Gastrocnemius medialis (tissue), 4 donors: ENCODE measurements at regions of chrX and their contacts with region 1.

Region 1: DNA sequence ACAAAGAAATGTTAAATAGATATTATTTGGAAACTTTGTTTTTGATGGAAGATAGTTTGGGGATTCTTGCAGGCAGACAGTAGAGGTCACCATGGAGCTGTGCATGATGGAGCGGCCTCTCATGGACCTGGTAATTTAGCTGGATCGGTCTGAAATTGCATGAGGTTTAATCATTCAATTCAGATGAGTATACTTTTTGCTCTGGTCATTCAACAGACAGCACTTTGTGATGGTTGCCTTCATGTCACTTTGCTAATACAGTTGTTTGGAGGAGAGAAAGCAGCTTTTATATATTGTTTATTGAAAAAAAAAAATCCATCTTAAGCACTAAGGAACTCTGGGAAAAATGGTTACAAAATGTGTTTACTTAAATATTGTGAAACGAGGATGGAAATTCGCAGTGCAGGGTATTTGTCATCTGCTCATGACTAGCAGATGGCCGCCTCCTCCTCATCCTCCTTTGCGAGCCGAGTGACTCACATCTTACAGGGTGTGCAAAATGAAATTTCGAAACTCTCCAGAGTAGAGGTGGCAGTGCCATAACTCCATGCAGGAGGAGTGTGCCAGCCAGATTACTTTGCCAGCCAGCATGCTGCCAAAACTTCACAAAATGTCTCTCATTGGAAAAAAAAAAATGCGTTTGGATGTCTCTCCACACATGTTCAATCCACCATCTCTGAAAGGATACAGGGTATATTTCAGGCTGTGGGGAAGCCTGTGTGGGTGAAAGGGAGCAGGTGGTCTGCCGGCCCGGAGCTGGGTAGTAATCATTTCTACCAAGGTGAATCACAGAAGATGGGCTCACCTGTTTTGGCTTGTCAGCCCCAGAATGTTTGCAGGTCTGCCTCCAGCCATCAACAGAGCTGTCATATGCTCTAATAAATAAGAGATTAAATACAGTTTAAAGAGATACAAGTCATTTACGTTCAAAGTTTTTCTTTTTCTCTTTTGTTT is 314.9 kb upstream of the DIPK2B start:
- DNase-seq: peak; percentile 71 to 77
- ATAC-seq: peak; percentile 96 to 98
- H3K4me3 ChIP-seq: peak overlapping the region in 1 of 4 donors; percentile 12
- H3K27ac ChIP-seq: peak overlapping the region; percentile 48 to 67 (median 64)
- H3K4me1 ChIP-seq: peaks cover 0 to 20% of the 10 kb centered on the region in 2 donors
- H3K27me3 ChIP-seq: peaks cover 0 to 5% (median 0%) of the 10 kb centered on the region in 3 donors
- CTCF ChIP-seq: peak in 4 of 5 experiments; percentile 23 to 54 (median 50)
- POLR2A ChIP-seq: peak in 1 of 2 donors; percentile 45

Region 2: DNA sequence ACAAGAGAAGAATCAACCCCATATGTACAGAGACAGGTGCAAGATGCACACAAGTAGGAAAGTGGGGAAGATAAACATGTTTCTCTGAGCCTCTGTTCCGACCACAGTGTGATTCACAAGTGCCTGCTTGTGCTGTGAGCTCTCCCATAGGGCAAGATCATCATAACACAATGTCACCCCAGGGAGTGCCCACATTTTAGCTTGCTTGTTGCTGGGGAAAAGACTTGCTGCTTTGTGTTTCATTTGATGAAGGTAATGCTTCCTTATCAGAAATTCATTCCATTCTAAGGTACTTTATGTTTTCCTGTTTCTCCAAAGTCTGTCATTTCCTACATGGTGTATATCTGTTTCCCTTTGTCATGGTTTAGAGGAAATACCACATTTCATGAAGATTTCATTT is 10.3 kb before region 1 on chrX:
- in situ Hi-C with region 1: no loop called
- intact Hi-C with region 1: loop called (anchors 1 kb)
- DNase-seq: no peak
- ATAC-seq: no peak
- H3K4me3 ChIP-seq: no peak overlapping the region
- H3K27ac ChIP-seq: peak overlapping the region in 1 of 4 donors; percentile 83
- H3K4me1 ChIP-seq: peaks cover 0 to 28% of the 10 kb centered on the region in 2 donors
- H3K27me3 ChIP-seq: no peaks in the 10 kb centered on the region
- CTCF ChIP-seq: no peak
- POLR2A ChIP-seq: no peak

Region 3: DNA sequence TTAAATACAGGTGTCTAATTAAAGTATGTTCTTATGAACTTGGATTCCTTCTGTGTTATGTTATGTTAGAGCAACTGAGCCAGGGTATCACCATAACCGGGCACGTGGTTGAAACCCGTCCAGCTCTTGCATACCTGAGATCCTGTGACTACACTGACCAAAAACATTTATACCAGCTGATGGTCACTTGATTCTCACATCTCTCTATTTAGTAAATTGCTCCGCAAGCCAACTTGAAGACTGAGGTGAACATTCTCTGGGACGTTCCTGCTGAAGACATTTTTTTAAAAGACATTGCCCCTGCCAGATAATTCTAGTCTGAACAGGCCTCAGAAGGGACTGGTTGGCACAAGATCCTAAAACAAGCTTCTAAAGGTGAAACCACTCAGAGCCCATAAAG is 235.1 kb after region 1 on chrX:
- in situ Hi-C with region 1: loop called in 2 of 4 experiments (anchors 25 kb)
- intact Hi-C with region 1: loop called (anchors 2 kb)
- DNase-seq: peak in 1 of 2 donors; percentile 15
- ATAC-seq: peak in 1 of 2 donors; percentile 72
- H3K4me3 ChIP-seq: no peak overlapping the region
- H3K27ac ChIP-seq: peak overlapping the region in 1 of 4 donors; percentile 25
- H3K4me1 ChIP-seq: peaks cover 0 to 5% of the 10 kb centered on the region in 2 donors
- H3K27me3 ChIP-seq: no peaks in the 10 kb centered on the region
- CTCF ChIP-seq: no peak
- POLR2A ChIP-seq: no peak

Region 4: GRCh38 chrX:45849253-45849862 is 333.8 kb after region 1 on chrX:
- in situ Hi-C with region 1: no loop called
- intact Hi-C with region 1: loop called (anchors 10 kb)
- DNase-seq: no peak
- ATAC-seq: no peak
- H3K4me3 ChIP-seq: peak overlapping the region in 1 of 4 donors; percentile 46
- H3K27ac ChIP-seq: no peak overlapping the region
- H3K4me1 ChIP-seq: no peaks in the 10 kb centered on the region
- H3K27me3 ChIP-seq: peaks cover 3 to 8% (median 8%) of the 10 kb centered on the region in 3 donors
- CTCF ChIP-seq: peak in 1 of 5 experiments; percentile 24
- POLR2A ChIP-seq: no peak